MCF 10A (cell line): ENCODE measurements at regions of chr1 and their contacts with region 1.

Region 1: DNA sequence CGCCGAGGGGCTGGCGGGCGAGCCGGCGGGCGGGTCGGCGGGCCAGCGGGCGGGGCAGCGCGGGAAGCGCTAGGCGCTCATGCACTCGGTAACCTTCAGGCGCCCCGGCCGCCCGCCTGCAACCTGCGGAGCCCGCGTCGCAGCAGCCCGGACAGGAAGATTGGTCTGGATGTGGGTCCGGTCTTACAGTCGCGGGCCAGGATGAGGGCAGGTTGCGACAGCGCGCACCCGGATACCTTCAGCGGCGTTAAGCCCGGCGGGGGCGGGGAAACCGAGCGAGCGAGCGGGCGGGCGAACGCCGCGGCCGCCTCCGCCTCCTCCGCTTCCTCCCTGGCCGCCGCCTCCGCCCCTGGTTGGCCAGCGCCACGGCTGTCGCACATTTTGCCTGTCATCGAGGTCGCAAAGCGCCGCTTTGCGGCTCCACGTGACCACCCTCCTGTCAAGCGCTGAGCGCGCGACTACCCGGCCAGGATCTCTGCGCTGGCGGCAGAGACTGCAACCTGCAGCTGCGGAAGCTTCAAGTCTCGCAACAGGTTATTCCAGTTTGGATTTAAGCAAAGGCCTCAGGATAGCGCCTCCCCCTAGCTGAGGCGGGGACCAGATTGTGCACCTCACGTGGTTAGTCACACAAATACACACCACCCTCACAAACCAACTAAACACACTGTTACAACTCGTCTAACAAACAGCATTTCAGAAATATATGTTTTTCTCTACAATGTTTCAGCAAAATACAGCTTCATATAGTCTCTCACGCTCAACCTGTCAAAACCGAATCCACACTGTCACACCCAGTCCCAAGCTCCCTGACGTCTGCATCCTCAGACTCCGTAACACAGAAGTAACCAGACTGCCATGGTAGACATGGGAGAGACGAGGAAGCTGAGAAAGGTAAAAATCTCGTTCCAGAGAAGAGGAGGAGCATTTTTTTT is at the start of gene FAF1:
- DNase-seq: peak; percentile 96
- H3K4me3 Mint-ChIP-seq: peak within 1 kb of the TSS; percentile 76
- H3K27ac Mint-ChIP-seq: peak within 1 kb of the TSS; percentile 1
- H3K4me1 Mint-ChIP-seq: peaks cover 11% of the 10 kb centered on the region
- H3K27me3 Mint-ChIP-seq: no peaks in the 10 kb centered on the region
- CTCF ChIP-seq: no peak
- total RNA-seq, gene FAF1: 74.4 and 93.2 TPM in 2 replicates

Region 2: DNA sequence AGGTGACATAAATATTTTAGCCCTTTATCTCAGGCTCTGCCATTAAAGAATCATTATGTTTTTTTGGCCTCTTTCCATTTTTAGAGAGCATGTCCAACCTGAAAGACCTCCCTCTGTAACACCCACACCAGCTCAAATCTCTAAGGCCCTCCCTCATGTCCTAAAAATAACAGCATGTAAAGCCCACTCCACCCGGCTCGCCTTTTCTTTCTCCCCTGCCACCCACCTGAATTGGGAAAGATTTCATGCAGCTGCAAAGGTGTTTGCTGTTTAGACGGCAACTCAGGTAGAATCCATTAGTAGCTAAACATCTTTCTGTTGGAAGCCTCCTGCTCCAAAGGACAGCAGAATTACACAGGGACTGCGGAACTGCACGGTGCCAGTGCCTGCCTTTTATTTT is 616.9 kb before region 1 on chr1:
- CTCF ChIA-PET with region 1: no interaction called
- POLR2A ChIA-PET with region 1: no interaction called
- intact Hi-C with region 1: no loop called
- DNase-seq: no peak
- H3K4me3 Mint-ChIP-seq: no peak overlapping the region
- H3K27ac Mint-ChIP-seq: no peak overlapping the region
- H3K4me1 Mint-ChIP-seq: no peaks in the 10 kb centered on the region
- H3K27me3 Mint-ChIP-seq: peaks cover 55% of the 10 kb centered on the region
- CTCF ChIP-seq: no peak

Region 3: GRCh38 chr1:50940291-50940690 is 19.9 kb before region 1 on chr1:
- CTCF ChIA-PET with region 1: interaction called, 10 read pairs
- POLR2A ChIA-PET with region 1: interaction called, 7 read pairs
- intact Hi-C with region 1: no loop called
- DNase-seq: no peak
- H3K4me3 Mint-ChIP-seq: no peak overlapping the region
- H3K27ac Mint-ChIP-seq: no peak overlapping the region
- H3K4me1 Mint-ChIP-seq: peaks cover 11% of the 10 kb centered on the region
- H3K27me3 Mint-ChIP-seq: no peaks in the 10 kb centered on the region
- CTCF ChIP-seq: no peak

Region 4: DNA sequence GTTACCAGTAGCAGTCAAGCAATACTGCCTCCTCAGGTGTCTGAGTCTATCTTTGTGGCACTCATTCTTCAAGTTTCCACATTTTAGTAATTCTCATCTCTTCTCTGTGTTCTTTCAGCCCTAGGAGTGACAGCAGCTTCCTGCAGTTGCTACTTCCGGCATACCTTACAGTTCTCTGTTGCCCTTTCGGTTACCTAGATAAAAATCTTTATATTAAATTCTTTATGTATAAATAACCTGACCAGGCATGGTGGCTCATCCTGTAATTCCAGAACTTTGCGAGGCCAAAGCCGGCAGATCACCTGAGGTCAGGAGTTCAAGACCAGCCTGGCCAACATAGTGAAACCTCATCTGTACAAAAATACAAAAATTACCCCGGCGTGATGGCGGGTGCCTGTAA is 72.7 kb after region 1 on chr1:
- CTCF ChIA-PET with region 1: no interaction called
- POLR2A ChIA-PET with region 1: no interaction called
- intact Hi-C with region 1: no loop called
- DNase-seq: no peak
- H3K4me3 Mint-ChIP-seq: no peak overlapping the region
- H3K27ac Mint-ChIP-seq: no peak overlapping the region
- H3K4me1 Mint-ChIP-seq: no peaks in the 10 kb centered on the region
- H3K27me3 Mint-ChIP-seq: no peaks in the 10 kb centered on the region
- CTCF ChIP-seq: no peak

Region 5: DNA sequence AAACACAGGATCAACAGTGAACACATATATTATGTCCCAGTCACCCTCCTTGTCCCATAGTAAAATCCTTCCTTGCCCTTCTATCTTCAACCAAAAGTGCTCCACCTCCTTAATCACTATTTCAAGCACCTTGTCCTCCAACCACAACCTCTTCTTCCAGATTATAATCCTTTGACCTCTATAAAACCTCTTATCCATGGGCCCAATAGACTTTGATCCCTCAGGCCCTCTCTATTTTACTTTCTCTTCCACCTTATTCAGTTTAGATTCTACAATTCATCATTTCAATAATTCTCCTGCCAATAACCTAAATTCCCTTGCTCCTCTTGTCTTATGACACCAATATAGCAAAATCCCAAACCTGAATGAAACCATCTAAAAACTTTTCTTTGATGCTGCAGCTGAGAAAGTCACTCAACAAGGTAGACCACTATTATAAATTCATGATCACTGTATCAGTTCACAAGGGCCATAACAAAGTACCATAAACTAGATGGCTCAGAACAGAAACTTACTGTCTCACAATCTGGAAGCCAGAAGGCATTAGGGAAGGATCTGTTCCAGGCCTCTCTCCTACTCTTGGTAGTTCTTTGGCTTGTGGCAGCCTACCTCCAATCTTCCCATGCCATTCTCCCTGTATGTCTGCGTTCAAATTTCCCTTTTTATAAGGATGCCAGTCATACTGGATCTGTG is 534.1 kb after region 1 on chr1:
- CTCF ChIA-PET with region 1: no interaction called
- POLR2A ChIA-PET with region 1: no interaction called
- intact Hi-C with region 1: no loop called
- DNase-seq: no peak
- H3K4me3 Mint-ChIP-seq: no peak overlapping the region
- H3K27ac Mint-ChIP-seq: no peak overlapping the region
- H3K4me1 Mint-ChIP-seq: peaks cover 28% of the 10 kb centered on the region
- H3K27me3 Mint-ChIP-seq: no peaks in the 10 kb centered on the region
- CTCF ChIP-seq: no peak